OCI-LY7 (cell line): ENCODE measurements at regions of chr4 and their contacts with region 1.

Region 1: DNA sequence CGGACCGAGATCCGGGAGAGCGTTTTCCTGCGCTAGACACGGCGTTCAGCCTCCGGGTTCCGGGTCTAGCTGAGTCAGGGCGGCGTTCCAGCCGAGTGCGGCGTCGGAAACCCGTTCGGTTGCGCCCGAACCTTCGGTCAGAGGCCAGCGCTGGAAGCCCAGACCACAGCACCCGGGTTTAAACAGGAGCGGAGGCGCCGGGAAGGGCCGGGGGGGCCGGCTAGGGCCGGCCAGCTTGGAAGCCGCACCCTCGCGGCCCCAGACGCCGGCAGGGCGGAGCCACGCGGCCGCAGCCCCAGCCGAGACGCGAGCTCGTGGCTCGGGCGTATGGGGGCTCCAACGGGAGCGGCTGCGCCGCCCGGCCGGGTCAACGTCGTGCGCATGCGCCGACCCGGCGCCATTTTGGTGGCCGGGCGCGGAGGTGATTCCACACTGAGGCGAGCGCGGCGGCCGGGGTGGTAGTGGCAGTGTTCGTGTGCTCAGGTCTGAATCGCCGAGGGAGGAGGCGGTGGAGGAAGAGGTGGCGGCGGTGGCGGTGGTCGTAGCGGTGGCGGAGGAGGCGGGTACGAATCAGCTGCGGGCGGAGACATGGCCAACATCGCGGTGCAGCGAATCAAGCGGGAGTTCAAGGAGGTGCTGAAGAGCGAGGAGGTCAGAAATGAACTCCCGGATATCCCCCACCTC is at the start of gene UBE2K:
- DNase-seq: peak; percentile 93
- H3K4me3 ChIP-seq: peak within 1 kb of the TSS; percentile 98
- H3K27ac ChIP-seq: peak within 1 kb of the TSS; percentile 74
- H3K4me1 ChIP-seq: peaks cover 29% of the 10 kb centered on the region
- CTCF ChIP-seq: no peak
- total RNA-seq, gene UBE2K: 20.8 and 47.7 TPM in 2 replicates

Region 2: DNA sequence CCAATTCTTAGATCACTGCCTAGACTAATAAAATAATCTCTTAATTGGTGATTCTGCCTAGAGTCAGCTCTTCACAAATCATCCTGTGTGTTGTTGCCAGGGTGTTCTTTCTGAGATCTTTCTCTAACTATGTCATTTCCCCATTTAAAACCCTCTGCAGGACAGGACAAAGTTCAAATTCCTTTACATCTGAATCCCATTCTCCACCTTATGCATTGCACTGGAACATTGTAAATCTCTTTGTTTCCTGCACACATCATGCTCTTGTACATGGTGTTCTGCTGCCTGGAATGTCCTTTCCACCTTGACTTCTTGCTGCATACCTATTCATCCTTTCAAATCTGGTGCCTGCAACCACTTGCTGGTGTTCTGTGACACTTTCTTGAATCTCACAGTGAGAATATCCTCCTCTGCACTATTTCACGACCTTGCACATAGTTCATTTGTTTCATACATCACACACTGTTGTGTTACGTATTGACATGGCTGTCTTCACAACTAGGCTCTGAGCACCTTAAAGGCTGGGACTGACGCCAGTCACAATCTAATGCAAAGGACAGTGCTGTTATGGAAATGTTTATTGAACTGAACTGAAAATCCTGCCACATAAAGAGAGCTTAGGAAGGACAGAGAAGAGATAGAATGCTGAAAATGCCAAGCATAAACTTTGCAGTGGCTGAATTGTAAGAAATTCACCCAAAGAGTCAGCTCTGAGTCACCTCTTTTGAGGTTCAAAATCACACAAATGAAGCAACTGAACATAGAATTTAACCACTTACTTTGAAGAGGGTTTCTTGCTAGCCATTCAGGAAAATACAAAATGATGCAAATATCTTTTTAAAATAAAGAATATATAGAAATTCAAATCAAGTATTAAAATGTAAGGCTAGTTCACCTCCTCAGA is 32.8 kb before region 1 on chr4:
- CTCF ChIA-PET with region 1: no interaction called
- POLR2A ChIA-PET with region 1: no interaction called
- intact Hi-C with region 1: no loop called
- DNase-seq: no peak
- H3K4me3 ChIP-seq: no peak overlapping the region
- H3K27ac ChIP-seq: no peak overlapping the region
- H3K4me1 ChIP-seq: no peaks in the 10 kb centered on the region
- CTCF ChIP-seq: no peak

Region 3: GRCh38 chr4:39786838-39787237 is 89.0 kb after region 1 on chr4:
- CTCF ChIA-PET with region 1: no interaction called
- POLR2A ChIA-PET with region 1: no interaction called
- intact Hi-C with region 1: loop called (anchors 5 kb)
- DNase-seq: no peak
- H3K4me3 ChIP-seq: no peak overlapping the region
- H3K27ac ChIP-seq: no peak overlapping the region
- H3K4me1 ChIP-seq: no peaks in the 10 kb centered on the region
- CTCF ChIP-seq: no peak

Region 4: DNA sequence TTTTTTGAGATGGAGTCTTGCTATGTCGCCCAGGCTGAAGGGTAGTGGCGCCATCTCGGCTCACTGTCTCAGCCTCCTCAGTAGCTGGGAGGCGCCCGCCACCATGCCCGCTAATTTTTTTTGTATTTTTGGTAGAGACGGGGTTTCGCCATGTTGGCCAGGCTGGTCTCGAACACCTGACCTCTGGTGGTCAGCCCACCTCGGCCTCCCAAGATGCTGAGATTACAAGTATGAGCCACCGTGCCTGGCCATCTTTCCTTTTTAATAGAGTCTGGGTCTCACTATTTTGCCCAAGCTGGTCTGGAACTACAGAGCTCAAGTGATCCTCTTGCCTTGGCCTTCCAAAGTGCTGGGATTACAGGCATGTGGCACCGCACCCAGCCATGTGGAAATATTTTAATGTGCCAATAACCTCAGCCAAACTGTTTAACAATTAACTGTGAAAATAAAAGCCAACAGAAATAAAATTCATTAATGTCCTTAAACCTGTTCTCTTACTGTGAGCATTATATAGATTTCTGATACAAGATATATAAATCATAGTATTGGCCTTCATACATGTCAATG is 263.5 kb after region 1 on chr4:
- CTCF ChIA-PET with region 1: no interaction called
- POLR2A ChIA-PET with region 1: interaction called, 5 read pairs
- intact Hi-C with region 1: loop called (anchors 5 kb)
- DNase-seq: no peak
- H3K4me3 ChIP-seq: peak overlapping the region; percentile 42
- H3K27ac ChIP-seq: peak overlapping the region; percentile 80
- H3K4me1 ChIP-seq: peaks cover 49% of the 10 kb centered on the region
- CTCF ChIP-seq: no peak